ENCODE measurements at regions of chr1 and their contacts with region 1.

Region 1: DNA sequence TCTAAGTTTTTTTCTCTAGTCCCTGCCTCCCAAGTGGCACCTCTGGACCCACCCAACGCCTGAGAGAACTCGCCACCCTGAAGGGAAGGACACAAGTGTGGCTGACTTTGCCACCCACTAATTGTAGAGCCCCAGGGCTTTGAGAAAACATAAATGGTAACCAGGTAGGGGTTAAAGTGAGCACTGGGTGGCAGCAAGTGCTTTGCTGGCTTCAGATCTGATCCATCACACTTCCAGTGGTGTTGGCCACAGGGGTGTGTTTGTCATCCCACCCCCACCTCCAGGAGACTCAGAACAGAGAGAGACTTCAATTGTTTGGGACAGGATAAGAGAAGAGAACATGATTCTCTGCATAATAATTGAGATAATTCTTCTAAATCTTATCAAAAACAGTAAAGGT is 637.1 kb upstream of the PRMT6 start:
- DNase-seq: no peak
- ATAC-seq: no peak
- H3K4me3 ChIP-seq: no peak overlapping the region
- H3K4me3 Mint-ChIP-seq: no peak overlapping the region
- H3K27ac ChIP-seq: no peak overlapping the region
- H3K27ac Mint-ChIP-seq: no peak overlapping the region
- H3K4me1 ChIP-seq: no peaks in the 10 kb centered on the region
- H3K4me1 Mint-ChIP-seq: no peaks in the 10 kb centered on the region
- H3K27me3 ChIP-seq: no peaks in the 10 kb centered on the region
- H3K27me3 Mint-ChIP-seq: no peaks in the 10 kb centered on the region

Region 2: GRCh38 chr1:106396023-106396422 is 23.3 kb before region 1 on chr1:
- CTCF ChIA-PET with region 1: no interaction called
- POLR2A ChIA-PET with region 1: interaction called in 1 of 2 experiments, 14 read pairs
- DNase-seq: no peak
- ATAC-seq: no peak
- H3K4me3 ChIP-seq: no peak overlapping the region
- H3K4me3 Mint-ChIP-seq: no peak overlapping the region
- H3K27ac ChIP-seq: no peak overlapping the region
- H3K27ac Mint-ChIP-seq: no peak overlapping the region
- H3K4me1 ChIP-seq: no peaks in the 10 kb centered on the region
- H3K4me1 Mint-ChIP-seq: no peaks in the 10 kb centered on the region
- H3K27me3 ChIP-seq: no peaks in the 10 kb centered on the region
- H3K27me3 Mint-ChIP-seq: no peaks in the 10 kb centered on the region

Region 3: GRCh38 chr1:106536741-106537140 is 117.4 kb after region 1 on chr1:
- CTCF ChIA-PET with region 1: no interaction called
- POLR2A ChIA-PET with region 1: no interaction called
- DNase-seq: no peak
- ATAC-seq: no peak
- H3K4me3 ChIP-seq: no peak overlapping the region
- H3K4me3 Mint-ChIP-seq: no peak overlapping the region
- H3K27ac ChIP-seq: no peak overlapping the region
- H3K27ac Mint-ChIP-seq: no peak overlapping the region
- H3K4me1 ChIP-seq: no peaks in the 10 kb centered on the region
- H3K4me1 Mint-ChIP-seq: no peaks in the 10 kb centered on the region
- H3K27me3 ChIP-seq: no peaks in the 10 kb centered on the region
- H3K27me3 Mint-ChIP-seq: no peaks in the 10 kb centered on the region

Region 4: GRCh38 chr1:106651028-106651766 is 231.9 kb after region 1 on chr1:
- CTCF ChIA-PET with region 1: no interaction called
- POLR2A ChIA-PET with region 1: no interaction called
- DNase-seq: no peak
- ATAC-seq: no peak
- H3K4me3 ChIP-seq: no peak overlapping the region
- H3K4me3 Mint-ChIP-seq: no peak overlapping the region
- H3K27ac ChIP-seq: no peak overlapping the region
- H3K27ac Mint-ChIP-seq: no peak overlapping the region
- H3K4me1 ChIP-seq: no peaks in the 10 kb centered on the region
- H3K4me1 Mint-ChIP-seq: no peaks in the 10 kb centered on the region
- H3K27me3 ChIP-seq: no peaks in the 10 kb centered on the region
- H3K27me3 Mint-ChIP-seq: no peaks in the 10 kb centered on the region

Measured in T-cell (primary cell).